ENCODE measurements at regions of chr3 and their contacts with region 1.

Region 1: GRCh38 chr3:124552239-124552638 is 178.0 kb upstream of the UMPS start:
- DNase-seq: peak; percentile 29 to 64
- ATAC-seq: peak; percentile 36 to 47; a peak in 3 of 6 replicates
- H3K4me3 ChIP-seq: no peak overlapping the region
- H3K27ac ChIP-seq: no peak overlapping the region
- H3K4me1 ChIP-seq: peaks cover 24% of the 10 kb centered on the region
- CTCF ChIP-seq: no peak
- EP300 ChIP-seq: no peak
- POLR2A ChIP-seq: no peak
- RAD21 ChIP-seq: no peak

Region 2: DNA sequence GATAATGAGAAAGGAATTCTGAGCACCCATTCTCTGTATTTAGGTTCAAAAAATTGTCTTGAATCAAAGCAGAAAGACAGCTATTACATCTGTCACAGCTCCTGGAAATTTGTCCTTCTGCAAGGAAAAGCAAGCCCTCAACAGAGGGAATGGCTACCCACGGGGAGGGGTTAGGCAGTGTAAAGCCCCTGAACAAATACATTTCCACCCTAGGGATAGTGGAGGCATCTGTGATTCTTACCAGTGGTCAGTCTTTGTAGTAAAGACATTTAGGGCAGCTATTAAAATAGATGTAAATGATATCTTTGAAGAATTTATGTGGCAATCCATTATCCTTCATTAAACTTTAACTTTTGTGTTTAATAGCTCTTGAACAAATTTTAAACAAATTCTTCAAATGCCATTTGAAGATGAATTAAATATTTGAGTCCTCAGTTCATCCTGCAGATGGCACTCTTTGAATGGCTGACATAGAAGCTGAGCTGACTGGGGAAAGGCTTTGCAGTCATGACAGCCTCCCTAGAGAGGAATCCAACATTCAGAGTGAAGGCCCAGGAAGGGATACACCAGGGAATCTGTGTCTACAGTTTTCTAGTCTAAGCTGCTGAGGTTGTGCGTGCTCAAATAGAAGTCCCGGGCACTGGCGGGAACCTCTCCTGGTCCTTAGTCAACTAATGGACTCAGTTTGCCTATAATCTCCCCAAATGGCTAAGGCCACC is 200.7 kb before region 1 on chr3:
- CTCF ChIA-PET with region 1: interaction called, 20 read pairs
- POLR2A ChIA-PET with region 1: no interaction called
- DNase-seq: peak; percentile 60 to 63
- ATAC-seq: peak; percentile 69 to 90
- H3K4me3 ChIP-seq: no peak overlapping the region
- H3K27ac ChIP-seq: no peak overlapping the region
- H3K4me1 ChIP-seq: peaks cover 6% of the 10 kb centered on the region; the same call in 2 of the 3 replicates
- CTCF ChIP-seq: peak; percentile 71
- EP300 ChIP-seq: no peak
- POLR2A ChIP-seq: no peak
- RAD21 ChIP-seq: peak; percentile 75 to 84

Region 3: DNA sequence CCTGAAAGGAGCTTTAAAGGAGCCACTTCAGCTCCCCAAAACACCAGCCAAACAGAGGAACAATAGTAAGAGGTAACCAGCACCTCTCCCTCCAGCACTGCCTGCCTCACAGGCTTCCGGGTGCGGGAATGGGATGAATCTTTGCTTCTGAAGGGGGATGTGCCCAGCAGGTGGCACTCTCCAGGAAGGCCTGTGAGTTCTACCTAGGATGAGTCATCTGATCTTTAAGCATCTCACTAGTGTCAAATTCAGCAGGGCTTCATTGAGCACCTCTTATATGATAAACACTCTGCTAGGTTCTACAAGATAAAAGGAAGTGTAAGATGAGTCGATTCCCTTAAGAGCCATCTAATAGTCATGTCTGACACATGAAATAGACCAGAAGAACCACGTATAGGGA is 59.4 kb before region 1 on chr3:
- CTCF ChIA-PET with region 1: interaction called, 10 read pairs
- POLR2A ChIA-PET with region 1: no interaction called
- DNase-seq: peak; percentile 64 to 85
- ATAC-seq: peak; percentile 81 to 93
- H3K4me3 ChIP-seq: no peak overlapping the region
- H3K27ac ChIP-seq: no peak overlapping the region
- H3K4me1 ChIP-seq: no peaks in the 10 kb centered on the region
- CTCF ChIP-seq: peak; percentile 52
- EP300 ChIP-seq: no peak
- POLR2A ChIP-seq: no peak
- RAD21 ChIP-seq: peak; percentile 42 to 46; a peak in 3 of 5 replicates

Region 4: DNA sequence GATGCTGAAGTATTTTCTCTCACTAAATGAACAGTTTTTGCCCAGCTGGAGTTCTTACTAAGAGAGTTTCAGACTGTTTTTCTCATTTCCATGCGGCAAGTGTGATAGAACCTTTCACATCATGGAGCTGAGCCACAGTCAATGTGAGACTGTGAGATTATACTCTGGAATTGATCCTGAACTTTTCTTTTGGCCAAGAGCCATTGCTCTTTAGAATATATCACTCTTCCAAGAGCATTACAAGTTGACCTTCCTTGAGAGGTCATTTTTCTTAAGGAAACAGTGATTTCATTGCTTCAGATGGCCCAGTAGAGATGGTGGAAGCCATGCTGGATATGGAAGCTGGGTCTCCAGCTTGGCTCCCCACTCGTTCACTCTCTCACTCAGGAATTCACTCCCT is 34.9 kb before region 1 on chr3:
- CTCF ChIA-PET with region 1: interaction called, 12 read pairs
- POLR2A ChIA-PET with region 1: no interaction called
- DNase-seq: no peak
- ATAC-seq: no peak
- H3K4me3 ChIP-seq: no peak overlapping the region
- H3K27ac ChIP-seq: no peak overlapping the region
- H3K4me1 ChIP-seq: peaks cover 30% of the 10 kb centered on the region
- CTCF ChIP-seq: no peak
- EP300 ChIP-seq: no peak
- POLR2A ChIP-seq: no peak
- RAD21 ChIP-seq: no peak

Region 5: GRCh38 chr3:124540550-124541211 is 11.6 kb before region 1 on chr3:
- CTCF ChIA-PET with region 1: interaction called, 15 read pairs
- POLR2A ChIA-PET with region 1: no interaction called
- DNase-seq: no peak
- ATAC-seq: no peak
- H3K4me3 ChIP-seq: no peak overlapping the region
- H3K27ac ChIP-seq: no peak overlapping the region
- H3K4me1 ChIP-seq: no peaks in the 10 kb centered on the region
- CTCF ChIP-seq: no peak
- EP300 ChIP-seq: no peak
- POLR2A ChIP-seq: no peak
- RAD21 ChIP-seq: no peak

Region 6: DNA sequence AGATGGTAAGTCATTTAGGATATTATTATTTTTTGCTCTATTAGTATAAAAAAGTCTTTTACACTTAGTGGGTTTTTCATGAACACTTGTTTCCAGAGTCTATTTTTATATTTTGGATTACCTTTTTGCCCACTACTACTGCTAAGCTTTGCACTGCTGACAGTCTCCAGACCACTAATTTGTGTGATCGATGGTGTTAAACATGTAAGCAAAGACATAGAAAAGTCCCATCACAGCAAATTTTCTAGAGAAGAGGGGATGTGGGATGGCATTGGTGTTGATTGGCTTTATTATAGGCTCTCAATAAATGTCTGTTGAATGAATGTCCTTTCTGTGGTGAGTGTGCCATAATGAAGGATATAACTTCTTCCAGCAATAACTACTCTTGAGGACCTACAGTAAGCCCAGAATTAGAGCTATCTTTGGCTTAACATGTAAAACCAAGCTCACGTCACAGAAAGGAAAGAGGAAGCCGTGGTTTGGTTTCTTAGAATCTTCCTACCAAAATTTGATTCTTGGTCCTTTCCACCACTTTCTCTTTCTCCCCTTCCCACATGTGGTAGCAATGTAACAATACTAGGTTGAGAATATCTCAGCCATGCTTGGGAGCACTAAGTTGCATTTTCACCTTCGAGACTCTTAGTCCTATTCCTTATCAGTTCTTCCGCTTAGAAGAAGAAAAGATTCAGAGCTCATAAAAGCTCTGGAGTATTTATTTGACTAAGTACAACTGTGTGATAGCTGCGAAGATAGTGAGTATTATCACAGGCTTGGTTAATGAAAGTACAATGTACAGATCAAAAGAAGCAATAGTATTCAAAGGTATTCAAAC is 87.4 kb after region 1 on chr3:
- CTCF ChIA-PET with region 1: no interaction called
- POLR2A ChIA-PET with region 1: no interaction called
- DNase-seq: no peak
- ATAC-seq: no peak
- H3K4me3 ChIP-seq: no peak overlapping the region
- H3K27ac ChIP-seq: no peak overlapping the region
- H3K4me1 ChIP-seq: peaks cover 23% of the 10 kb centered on the region
- CTCF ChIP-seq: no peak
- EP300 ChIP-seq: no peak
- POLR2A ChIP-seq: no peak
- RAD21 ChIP-seq: no peak

Region 7: DNA sequence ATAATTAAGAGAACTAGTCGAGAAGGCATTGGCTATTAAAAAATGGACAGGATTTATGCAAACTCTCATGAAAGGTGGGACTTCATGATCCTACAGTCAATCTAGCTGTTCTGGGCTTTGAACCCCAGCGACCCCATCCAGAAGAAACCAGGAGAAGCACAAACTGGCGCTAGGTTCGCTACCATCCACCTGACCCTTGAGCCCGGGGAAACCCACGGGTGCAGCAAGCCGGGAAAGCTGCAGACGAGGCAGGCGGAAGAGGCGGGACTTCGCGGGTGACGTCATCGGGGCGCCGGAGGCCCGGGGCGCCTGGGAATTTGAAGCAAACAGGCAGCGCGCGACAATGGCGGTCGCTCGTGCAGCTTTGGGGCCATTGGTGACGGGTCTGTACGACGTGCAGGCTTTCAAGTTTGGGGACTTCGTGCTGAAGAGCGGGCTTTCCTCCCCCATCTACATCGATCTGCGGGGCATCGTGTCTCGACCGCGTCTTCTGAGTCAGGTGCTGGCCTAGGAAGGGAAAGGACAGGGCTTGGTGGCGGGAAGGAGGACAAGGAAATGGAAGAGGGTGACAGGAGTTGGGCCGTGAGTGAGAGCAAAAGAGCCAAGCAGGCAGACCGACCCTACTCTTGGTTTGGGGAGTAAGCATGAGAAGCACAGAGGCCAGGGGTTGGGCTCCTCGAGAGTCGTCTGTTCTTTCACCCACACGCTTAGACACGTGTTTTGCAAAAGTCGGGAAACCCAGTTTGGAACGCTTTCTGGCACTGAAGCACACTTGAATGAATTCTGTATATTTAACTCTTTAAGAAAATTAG is 178.1 kb after region 1 on chr3 and contains the start of gene UMPS:
- CTCF ChIA-PET with region 1: no interaction called
- POLR2A ChIA-PET with region 1: no interaction called
- DNase-seq: peak; percentile 79 to 86
- ATAC-seq: peak; percentile 99 to 100
- H3K4me3 ChIP-seq: peak within 1 kb of the TSS; percentile 73
- H3K27ac ChIP-seq: peak within 1 kb of the TSS; percentile 80 to 94
- H3K4me1 ChIP-seq: peaks cover 25% of the 10 kb centered on the region
- CTCF ChIP-seq: no peak
- EP300 ChIP-seq: no peak
- POLR2A ChIP-seq: peak; percentile 91
- RAD21 ChIP-seq: no peak
- polyA plus RNA-seq, gene UMPS: 54.2 and 64.4 TPM in 2 replicates